ENCODE measurements at regions of chr2 and their contacts with region 1.

Region 1: DNA sequence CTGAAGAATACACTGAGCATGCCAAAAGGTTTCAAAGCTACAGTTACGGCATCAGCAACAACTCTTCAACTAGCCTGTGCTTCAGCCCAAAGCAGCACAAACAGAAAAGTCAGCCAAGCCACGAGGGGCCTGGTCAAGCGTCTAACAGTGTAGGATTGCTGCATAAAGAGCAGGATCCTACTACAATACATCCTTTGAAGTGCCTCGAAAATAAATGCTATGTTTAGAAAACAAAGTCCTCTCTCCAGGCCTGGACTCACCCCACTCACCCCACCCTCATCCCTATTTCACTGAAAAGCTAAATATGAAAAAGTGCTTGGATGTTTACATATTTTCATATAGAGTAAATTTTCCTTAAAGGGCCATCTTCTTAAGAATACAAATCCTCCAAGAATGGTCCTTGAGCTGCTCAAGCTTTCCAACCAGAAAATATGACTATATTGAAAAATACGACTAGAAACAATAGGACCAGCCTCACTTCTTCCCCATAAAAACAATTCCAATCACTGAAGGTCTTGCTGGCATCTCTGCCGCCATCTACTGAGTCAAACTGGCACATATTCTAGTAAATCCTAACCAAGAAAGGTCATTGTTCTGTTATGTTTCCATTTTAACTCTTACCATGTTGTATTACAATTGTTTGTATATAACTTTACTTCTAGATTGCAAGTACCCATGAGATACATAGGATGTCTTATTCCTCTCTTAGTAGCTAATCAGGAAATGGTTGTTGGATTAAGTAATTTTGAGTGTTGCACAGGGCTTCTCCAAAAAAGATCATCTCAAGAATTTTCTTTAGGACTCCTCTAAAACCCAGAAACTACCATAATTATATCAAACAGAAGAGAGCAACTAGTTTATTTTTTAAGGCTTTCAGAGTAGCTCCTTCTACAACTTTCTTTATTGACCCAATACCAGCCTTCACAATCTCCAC is 63.6 kb downstream of the CLHC1 start:
- DNase-seq: peak; percentile 41 to 68
- H3K4me3 ChIP-seq: no peak overlapping the region
- H3K27ac ChIP-seq: no peak overlapping the region
- H3K4me1 ChIP-seq: peaks cover 52% of the 10 kb centered on the region
- H3K27me3 ChIP-seq: no peaks in the 10 kb centered on the region
- CTCF ChIP-seq: peak; percentile 92

Region 2: GRCh38 chr2:54723131-54723995 is 445.1 kb before region 1 on chr2 and contains the start of gene EML6:
- CTCF ChIA-PET with region 1: no interaction called
- POLR2A ChIA-PET with region 1: no interaction called
- intact Hi-C with region 1: loop called (anchors 5 kb)
- DNase-seq: peak; percentile 99
- H3K4me3 ChIP-seq: peak within 1 kb of the TSS; percentile 80
- H3K27ac ChIP-seq: peak within 1 kb of the TSS; percentile 56
- H3K4me1 ChIP-seq: peaks cover 33% of the 10 kb centered on the region
- H3K27me3 ChIP-seq: no peaks in the 10 kb centered on the region
- CTCF ChIP-seq: peak; percentile 36; the same call in 1 of the 2 replicates
- total RNA-seq, gene EML6: 3.7 and 6.7 TPM in 2 replicates

Region 3: DNA sequence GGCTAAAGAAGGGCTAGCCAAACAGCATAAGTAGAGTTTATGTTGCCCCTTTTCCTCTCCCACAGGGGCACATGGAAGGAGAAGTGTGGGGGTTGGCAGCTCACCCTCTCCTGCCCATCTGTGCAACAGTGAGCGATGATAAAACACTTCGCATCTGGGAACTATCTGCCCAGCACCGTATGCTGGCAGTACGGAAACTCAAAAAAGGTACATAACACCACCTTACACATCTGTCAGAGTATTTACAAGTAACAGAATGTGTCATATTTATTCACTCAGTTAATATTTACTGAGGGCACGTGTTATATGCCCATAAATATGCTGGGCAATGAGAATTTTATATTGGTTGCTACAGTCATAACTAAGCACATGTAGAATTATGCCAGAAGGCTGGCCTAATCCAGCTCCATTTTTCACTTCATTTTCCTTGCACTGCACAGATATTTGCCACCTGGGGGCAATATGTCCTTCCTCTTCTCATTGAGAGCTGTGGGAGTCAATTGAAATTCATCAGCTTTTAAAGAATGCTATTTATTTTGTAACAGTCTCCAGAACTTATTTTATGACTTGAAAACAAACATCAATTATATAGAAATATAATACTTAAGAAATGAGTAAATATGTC is 268.8 kb before region 1 on chr2:
- CTCF ChIA-PET with region 1: interaction called, 7 read pairs
- POLR2A ChIA-PET with region 1: no interaction called
- intact Hi-C with region 1: loop called (anchors 1 kb)
- DNase-seq: peak in 1 of 2 experiments; percentile 53
- H3K4me3 ChIP-seq: no peak overlapping the region
- H3K27ac ChIP-seq: no peak overlapping the region
- H3K4me1 ChIP-seq: peaks cover 23% of the 10 kb centered on the region
- H3K27me3 ChIP-seq: no peaks in the 10 kb centered on the region
- CTCF ChIP-seq: peak; percentile 76

Region 4: GRCh38 chr2:54977149-54977548 is 191.3 kb before region 1 on chr2:
- CTCF ChIA-PET with region 1: no interaction called
- POLR2A ChIA-PET with region 1: no interaction called
- intact Hi-C with region 1: loop called (anchors 5 kb)
- DNase-seq: no peak
- H3K4me3 ChIP-seq: no peak overlapping the region
- H3K27ac ChIP-seq: no peak overlapping the region
- H3K4me1 ChIP-seq: peaks cover 26% of the 10 kb centered on the region
- H3K27me3 ChIP-seq: no peaks in the 10 kb centered on the region
- CTCF ChIP-seq: no peak

Region 5: DNA sequence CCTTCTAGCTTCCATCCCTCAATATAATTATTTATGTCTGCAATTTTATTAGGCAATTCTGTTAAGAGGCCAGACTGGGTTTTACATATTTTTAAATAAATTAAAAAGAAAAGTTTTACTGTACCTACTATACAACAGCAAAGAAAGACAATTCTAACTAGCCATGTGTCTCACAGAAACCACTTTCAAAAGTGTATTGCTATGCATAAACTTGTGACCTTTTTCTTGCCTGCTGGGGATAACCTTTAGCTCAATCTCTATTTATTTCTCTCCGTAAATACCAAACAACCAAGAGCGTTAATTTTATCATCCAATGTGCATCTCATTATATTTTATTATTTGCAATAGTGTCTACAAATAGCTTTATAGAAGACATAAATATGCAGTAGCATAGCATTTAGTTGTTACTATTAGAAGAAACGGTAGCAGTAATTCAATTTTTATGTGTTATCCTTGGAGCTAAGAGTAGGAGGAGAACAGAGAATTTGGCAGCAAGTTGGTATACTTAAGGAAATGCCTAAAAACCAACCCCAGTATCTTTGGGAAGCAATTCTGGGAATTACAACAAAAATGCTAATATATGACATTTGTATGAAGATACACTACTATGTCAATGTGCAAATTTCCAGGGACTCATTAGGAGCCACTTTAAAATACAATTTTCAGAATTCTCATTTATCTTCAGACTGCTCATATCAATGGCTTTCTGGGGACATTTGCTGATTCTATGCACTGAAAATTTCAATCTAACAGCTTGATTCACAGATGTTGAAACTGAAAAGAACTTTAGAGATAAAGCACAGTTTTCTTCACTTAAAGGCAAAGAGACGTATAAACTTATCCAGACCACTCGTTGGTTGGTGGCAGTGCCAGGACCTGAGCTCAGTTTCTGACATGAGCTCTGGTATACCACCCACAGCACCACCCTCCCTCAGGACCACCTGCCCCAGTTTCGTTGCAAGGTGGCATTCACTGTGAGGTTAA is 95.2 kb before region 1 on chr2:
- CTCF ChIA-PET with region 1: interaction called, 22 read pairs
- POLR2A ChIA-PET with region 1: no interaction called
- intact Hi-C with region 1: no loop called
- DNase-seq: no peak
- H3K4me3 ChIP-seq: no peak overlapping the region
- H3K27ac ChIP-seq: no peak overlapping the region
- H3K4me1 ChIP-seq: 0 out of 2 replicates have a peak, but pooled peaks cover 4% of the 10 kb centered on the region
- H3K27me3 ChIP-seq: no peaks in the 10 kb centered on the region
- CTCF ChIP-seq: no peak

Region 6: GRCh38 chr2:55111570-55112228 is 56.8 kb before region 1 on chr2:
- CTCF ChIA-PET with region 1: interaction called, 7 read pairs
- POLR2A ChIA-PET with region 1: no interaction called
- intact Hi-C with region 1: loop called (anchors 5 kb)
- DNase-seq: peak; percentile 77 to 96
- H3K4me3 ChIP-seq: peak overlapping the region; percentile 11; the same call in 1 of the 2 replicates
- H3K27ac ChIP-seq: peak overlapping the region; percentile 75
- H3K4me1 ChIP-seq: peaks cover 98% of the 10 kb centered on the region
- H3K27me3 ChIP-seq: no peaks in the 10 kb centered on the region
- CTCF ChIP-seq: no peak